ENCODE measurements at regions of chr2 and their contacts with region 1.

Region 1: GRCh38 chr2:106085181-106085940 is 108.7 kb downstream of the UXS1 start:
- DNase-seq: peak; percentile 78
- ATAC-seq: peak; percentile 96
- H3K4me3 Mint-ChIP-seq: peak overlapping the region; percentile 54
- H3K27ac Mint-ChIP-seq: peak overlapping the region; percentile 87
- H3K4me1 Mint-ChIP-seq: peaks cover 68% of the 10 kb centered on the region
- H3K27me3 Mint-ChIP-seq: no peaks in the 10 kb centered on the region

Region 2: GRCh38 chr2:105337124-105338019 is 748.0 kb before region 1 on chr2 and contains the start of gene C2orf49:
- CTCF ChIA-PET with region 1: no interaction called
- POLR2A ChIA-PET with region 1: no interaction called
- intact Hi-C with region 1: loop called in 1 of 2 experiments (anchors 5 kb)
- DNase-seq: peak; percentile 94
- ATAC-seq: peak; percentile 93
- H3K4me3 Mint-ChIP-seq: peak within 1 kb of the TSS; percentile 91
- H3K27ac Mint-ChIP-seq: peak within 1 kb of the TSS; percentile 100
- H3K4me1 Mint-ChIP-seq: peaks cover 27% of the 10 kb centered on the region
- H3K27me3 Mint-ChIP-seq: no peaks in the 10 kb centered on the region
- total RNA-seq, gene C2orf49: 19.3 to 27.8 TPM

Region 3: GRCh38 chr2:105398699-105399432 is 686.5 kb before region 1 on chr2 and contains the start of gene FHL2:
- CTCF ChIA-PET with region 1: no interaction called
- POLR2A ChIA-PET with region 1: no interaction called
- intact Hi-C with region 1: loop called in 1 of 2 experiments (anchors 5 kb)
- DNase-seq: peak; percentile 86
- ATAC-seq: peak; percentile 93
- H3K4me3 Mint-ChIP-seq: peak within 1 kb of the TSS; percentile 74
- H3K27ac Mint-ChIP-seq: peak within 1 kb of the TSS; percentile 65
- H3K4me1 Mint-ChIP-seq: peaks cover 13% of the 10 kb centered on the region
- H3K27me3 Mint-ChIP-seq: peaks cover 10% of the 10 kb centered on the region
- total RNA-seq, gene FHL2: 3.9 to 4.7 TPM

Region 4: DNA sequence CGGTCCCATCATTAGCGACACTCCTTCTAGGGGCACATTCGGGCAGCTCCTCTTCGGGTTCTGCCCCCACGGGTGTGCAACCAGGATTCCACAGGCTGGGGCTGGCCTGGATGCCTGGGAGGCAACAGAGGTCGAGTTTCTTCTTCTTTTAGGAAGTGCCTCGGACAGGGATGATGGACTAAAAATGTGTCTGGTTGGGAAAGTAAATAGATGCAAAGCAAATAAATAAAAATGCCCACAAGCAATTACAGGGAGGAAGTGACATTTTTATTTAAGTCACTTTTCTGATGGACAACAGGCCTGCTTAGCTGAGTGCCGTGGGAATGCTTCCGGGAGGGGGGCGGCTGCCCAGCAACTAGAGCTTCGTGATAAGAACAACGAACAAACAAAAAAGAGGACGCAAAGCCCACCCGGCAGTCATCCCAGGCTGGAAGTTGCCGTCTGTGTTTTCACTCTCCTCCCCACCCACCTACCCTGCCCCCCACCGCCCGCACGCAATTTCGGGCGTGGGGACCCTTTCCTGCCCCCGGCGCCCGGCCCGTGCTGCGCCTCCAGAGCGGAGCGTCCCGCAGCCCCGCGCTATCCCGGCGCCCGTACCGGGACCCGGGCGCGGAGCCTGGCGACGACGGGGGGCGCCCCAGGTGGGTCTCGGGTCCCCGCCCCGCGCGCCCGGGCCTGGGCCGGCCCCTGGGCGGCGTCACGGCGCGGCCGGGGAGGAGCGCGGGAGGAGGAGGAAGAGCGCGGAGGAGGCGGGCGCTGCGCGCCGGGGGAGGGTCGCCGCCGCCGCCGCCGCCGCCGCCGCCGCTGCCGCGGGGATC is 341.1 kb before region 1 on chr2:
- CTCF ChIA-PET with region 1: interaction called, 5 read pairs
- POLR2A ChIA-PET with region 1: no interaction called
- intact Hi-C with region 1: loop called (anchors 2 to 5 kb)
- DNase-seq: peak; percentile 79
- ATAC-seq: peak; percentile 42
- H3K4me3 Mint-ChIP-seq: peak overlapping the region; percentile 77
- H3K27ac Mint-ChIP-seq: peak overlapping the region; percentile 87
- H3K4me1 Mint-ChIP-seq: peaks cover 70% of the 10 kb centered on the region
- H3K27me3 Mint-ChIP-seq: no peaks in the 10 kb centered on the region

Region 5: GRCh38 chr2:105858868-105859693 is 226.3 kb before region 1 on chr2:
- CTCF ChIA-PET with region 1: no interaction called
- POLR2A ChIA-PET with region 1: no interaction called
- intact Hi-C with region 1: loop called (anchors 2 to 5 kb)
- DNase-seq: peak; percentile 51
- ATAC-seq: peak; percentile 65
- H3K4me3 Mint-ChIP-seq: peak overlapping the region; percentile 40
- H3K27ac Mint-ChIP-seq: peak overlapping the region; percentile 92
- H3K4me1 Mint-ChIP-seq: peaks cover 93% of the 10 kb centered on the region
- H3K27me3 Mint-ChIP-seq: no peaks in the 10 kb centered on the region

Region 6: DNA sequence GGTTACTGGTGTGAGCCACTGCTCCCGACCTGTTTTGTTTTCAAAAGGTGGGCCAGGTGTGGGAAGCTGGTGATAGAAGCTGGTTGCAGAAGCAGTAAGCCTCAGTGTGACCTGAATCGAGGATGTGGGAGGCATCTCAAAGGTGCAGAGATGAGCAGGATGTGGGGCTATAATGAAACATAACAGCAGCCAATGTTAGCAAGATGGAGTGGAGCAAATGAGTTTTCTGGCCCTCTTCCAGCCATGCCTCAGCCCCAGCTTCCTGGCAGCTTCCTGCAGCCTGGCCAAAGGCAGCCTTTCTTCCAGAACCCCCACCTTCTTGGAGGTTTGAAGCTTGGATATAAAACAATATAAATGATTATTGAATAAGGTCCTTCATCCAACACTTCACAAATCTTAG is 155.8 kb before region 1 on chr2:
- CTCF ChIA-PET with region 1: no interaction called
- POLR2A ChIA-PET with region 1: no interaction called
- intact Hi-C with region 1: loop called in 1 of 2 experiments (anchors 5 kb)
- DNase-seq: peak; percentile 73
- ATAC-seq: peak; percentile 72
- H3K4me3 Mint-ChIP-seq: no peak overlapping the region
- H3K27ac Mint-ChIP-seq: peak overlapping the region; percentile 61
- H3K4me1 Mint-ChIP-seq: peaks cover 55% of the 10 kb centered on the region
- H3K27me3 Mint-ChIP-seq: no peaks in the 10 kb centered on the region

Region 7: GRCh38 chr2:106153781-106154180 is 68.4 kb after region 1 on chr2:
- CTCF ChIA-PET with region 1: no interaction called
- POLR2A ChIA-PET with region 1: no interaction called
- intact Hi-C with region 1: no loop called
- DNase-seq: no peak
- ATAC-seq: no peak
- H3K4me3 Mint-ChIP-seq: no peak overlapping the region
- H3K27ac Mint-ChIP-seq: no peak overlapping the region
- H3K4me1 Mint-ChIP-seq: peaks cover 31% of the 10 kb centered on the region
- H3K27me3 Mint-ChIP-seq: no peaks in the 10 kb centered on the region

Measured in activated CD4-positive, alpha-beta T cell treated with anti-CD3 and anti-CD28 coated beads for 36 hours (primary cell).